ENCODE measurements at regions of chr12 and their contacts with region 1.

Region 1: DNA sequence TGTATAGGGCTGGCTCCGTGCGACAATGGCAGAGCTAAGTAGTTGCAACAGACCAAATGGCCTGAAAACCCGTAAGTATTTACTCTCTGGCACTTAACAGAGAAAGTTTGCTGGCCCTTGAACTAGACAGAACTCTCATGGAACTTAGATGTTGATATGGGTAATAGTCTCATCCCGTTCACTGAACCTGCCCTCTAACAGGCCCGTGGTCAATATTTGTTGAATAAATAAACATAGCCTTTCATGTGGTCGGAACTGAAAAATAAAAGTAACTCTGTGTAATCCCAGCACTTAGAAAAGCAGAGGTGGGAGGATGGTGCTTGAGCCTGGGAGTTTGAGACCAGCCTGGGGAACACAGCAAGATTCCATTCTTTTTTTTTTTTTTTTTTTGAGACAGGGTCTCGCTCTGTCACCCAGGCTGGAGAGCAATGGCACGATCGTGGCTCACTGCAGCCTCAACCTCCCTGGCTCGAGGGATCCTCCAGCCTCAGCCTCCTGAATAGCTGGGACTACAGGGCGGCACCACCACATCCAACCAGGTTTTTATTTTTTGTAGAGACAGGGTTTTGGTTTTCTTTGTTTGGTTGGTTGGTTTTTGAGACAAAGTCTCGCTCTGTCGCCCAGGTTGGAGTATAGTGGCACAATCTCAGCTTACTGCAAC is 29.7 kb downstream of the KDM2B start:
- DNase-seq: no peak
- ATAC-seq: no peak
- H3K4me3 Mint-ChIP-seq: no peak overlapping the region
- H3K27ac Mint-ChIP-seq: no peak overlapping the region
- H3K4me1 Mint-ChIP-seq: peaks cover 13% of the 10 kb centered on the region
- H3K27me3 Mint-ChIP-seq: no peaks in the 10 kb centered on the region

Region 2: GRCh38 chr12:121364683-121365121 is 186.4 kb before region 1 on chr12:
- CTCF ChIA-PET with region 1: no interaction called
- DNase-seq: no peak
- ATAC-seq: no peak
- H3K4me3 Mint-ChIP-seq: no peak overlapping the region
- H3K27ac Mint-ChIP-seq: no peak overlapping the region
- H3K4me1 Mint-ChIP-seq: peaks cover 12% of the 10 kb centered on the region
- H3K27me3 Mint-ChIP-seq: peaks cover 27% of the 10 kb centered on the region

Region 3: GRCh38 chr12:121483949-121484348 is 67.2 kb before region 1 on chr12:
- CTCF ChIA-PET with region 1: interaction called, 13 read pairs
- DNase-seq: no peak
- ATAC-seq: no peak
- H3K4me3 Mint-ChIP-seq: no peak overlapping the region
- H3K27ac Mint-ChIP-seq: no peak overlapping the region
- H3K4me1 Mint-ChIP-seq: no peaks in the 10 kb centered on the region
- H3K27me3 Mint-ChIP-seq: no peaks in the 10 kb centered on the region

Region 4: GRCh38 chr12:121536899-121537813 is 13.9 kb before region 1 on chr12:
- CTCF ChIA-PET with region 1: interaction called, 10 read pairs
- DNase-seq: peak; percentile 79
- ATAC-seq: peak; percentile 65
- H3K4me3 Mint-ChIP-seq: peak overlapping the region; percentile 71
- H3K27ac Mint-ChIP-seq: peak overlapping the region; percentile 67
- H3K4me1 Mint-ChIP-seq: peaks cover 53% of the 10 kb centered on the region
- H3K27me3 Mint-ChIP-seq: no peaks in the 10 kb centered on the region

Region 5: GRCh38 chr12:121579981-121580868 is 29.1 kb after region 1 on chr12:
- CTCF ChIA-PET with region 1: interaction called, 32 read pairs
- DNase-seq: peak; percentile 85
- ATAC-seq: peak; percentile 78
- H3K4me3 Mint-ChIP-seq: peak overlapping the region; percentile 85
- H3K27ac Mint-ChIP-seq: peak overlapping the region; percentile 96
- H3K4me1 Mint-ChIP-seq: peaks cover 26% of the 10 kb centered on the region
- H3K27me3 Mint-ChIP-seq: no peaks in the 10 kb centered on the region

Region 6: DNA sequence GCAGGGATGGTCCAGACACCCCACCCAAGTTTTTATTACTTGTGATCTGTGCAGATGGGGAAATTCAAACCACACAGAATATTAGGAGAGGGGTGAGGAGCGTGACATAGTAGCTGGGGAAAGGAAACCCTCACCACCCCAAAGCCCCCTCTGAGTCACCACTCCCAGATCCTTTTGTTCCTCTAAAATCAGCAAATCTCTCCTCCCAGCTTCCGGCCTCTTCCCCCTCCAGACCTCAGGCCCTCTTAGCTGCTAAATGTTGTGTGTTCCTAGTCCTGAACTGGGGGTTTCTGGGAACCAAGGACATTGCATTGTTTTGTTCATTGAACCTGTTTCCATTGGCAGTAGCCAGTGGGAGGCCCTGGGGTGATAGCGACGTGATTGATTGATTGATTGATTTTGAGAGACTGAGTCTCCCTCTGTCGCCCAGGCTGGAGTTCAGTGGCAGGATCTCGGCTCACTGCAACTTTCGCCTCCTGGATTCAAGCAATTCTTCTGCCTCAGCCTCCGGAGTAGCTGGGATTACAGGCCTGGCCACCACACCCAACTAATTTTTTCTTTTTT is 69.3 kb after region 1 on chr12:
- CTCF ChIA-PET with region 1: interaction called, 111 read pairs
- DNase-seq: no peak
- ATAC-seq: no peak
- H3K4me3 Mint-ChIP-seq: no peak overlapping the region
- H3K27ac Mint-ChIP-seq: no peak overlapping the region
- H3K4me1 Mint-ChIP-seq: peaks cover 7% of the 10 kb centered on the region
- H3K27me3 Mint-ChIP-seq: no peaks in the 10 kb centered on the region

Region 7: DNA sequence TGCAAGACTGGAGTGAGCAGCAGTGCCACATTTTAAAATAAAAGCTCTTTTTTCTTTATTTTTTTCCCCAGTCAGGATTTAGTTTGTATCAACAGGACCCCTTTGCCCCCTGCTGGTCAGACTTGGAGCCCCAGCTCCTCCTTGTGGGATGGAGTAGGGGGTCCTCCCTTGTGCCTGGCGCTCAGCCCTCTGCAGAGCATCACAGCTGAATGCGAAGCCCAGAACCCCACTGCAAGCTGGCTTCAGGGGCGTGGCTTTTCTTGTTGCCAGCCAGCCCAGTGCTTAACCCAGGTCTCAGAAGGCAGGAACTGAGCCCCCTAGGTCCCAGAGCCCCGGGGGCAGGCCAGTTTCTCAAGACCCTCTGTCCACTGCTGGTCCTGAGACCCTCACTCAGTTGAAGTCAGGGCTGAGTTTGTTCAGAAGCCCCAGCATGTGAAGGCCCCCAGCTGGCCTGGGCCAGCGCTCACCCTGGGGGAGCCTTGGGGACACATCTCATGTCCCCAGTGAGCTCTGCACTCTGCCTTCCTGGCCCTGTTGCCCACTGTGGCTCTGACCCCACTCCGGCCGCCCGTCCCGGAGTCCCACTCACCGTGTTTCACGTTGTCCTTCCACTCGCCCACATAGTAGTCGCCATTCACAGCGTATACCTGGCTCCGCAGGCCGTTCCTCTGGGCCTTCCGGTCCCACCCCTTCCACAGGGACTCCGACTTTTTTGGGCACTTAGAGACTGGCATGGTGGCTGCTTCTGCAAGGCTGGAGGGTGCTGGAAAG is 117.8 kb after region 1 on chr12:
- CTCF ChIA-PET with region 1: interaction called, 64 read pairs
- DNase-seq: peak; percentile 68
- ATAC-seq: no peak
- H3K4me3 Mint-ChIP-seq: no peak overlapping the region
- H3K27ac Mint-ChIP-seq: no peak overlapping the region
- H3K4me1 Mint-ChIP-seq: peaks cover 51% of the 10 kb centered on the region
- H3K27me3 Mint-ChIP-seq: no peaks in the 10 kb centered on the region

Region 8: DNA sequence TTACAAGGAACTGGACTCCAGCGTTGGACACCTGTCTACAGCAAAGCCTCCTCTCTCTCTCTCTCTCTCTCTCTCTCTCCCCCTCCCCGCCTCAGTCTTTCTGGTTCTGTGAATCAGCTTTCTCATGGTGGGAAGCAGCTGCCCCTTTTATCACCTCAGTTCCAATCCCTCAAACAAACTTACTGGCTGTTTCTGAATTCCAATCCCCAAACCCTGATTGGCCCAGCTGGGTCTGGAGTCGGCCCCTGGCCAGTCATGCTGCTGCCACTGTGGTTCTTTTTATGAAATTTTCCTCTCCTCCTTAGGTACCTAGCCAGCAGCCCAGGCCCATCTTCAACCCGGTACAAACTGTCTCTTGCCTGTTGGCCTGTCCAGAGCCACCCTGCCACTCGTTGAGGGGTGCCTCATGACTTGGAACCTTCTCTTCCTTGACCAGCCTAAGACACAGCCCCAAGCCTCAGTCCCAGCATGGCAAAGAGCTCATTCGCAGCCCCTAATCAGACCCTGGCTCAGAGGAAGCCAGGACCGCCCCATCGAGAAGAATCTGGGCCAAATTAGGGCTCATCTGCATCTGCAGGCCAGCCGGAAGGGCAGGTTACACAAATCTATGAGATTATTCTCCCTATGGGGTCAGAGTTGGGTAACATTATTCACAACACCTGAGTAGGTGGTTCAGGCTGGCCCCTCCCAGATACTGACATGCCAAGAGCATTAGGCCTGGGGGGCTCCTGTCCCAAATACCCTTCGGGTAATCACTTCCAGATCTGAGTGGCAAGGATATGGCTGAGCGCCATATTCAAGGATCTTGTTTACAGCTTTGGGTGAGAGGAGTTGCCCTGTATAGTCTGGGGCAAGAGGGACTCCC is 127.8 kb after region 1 on chr12:
- CTCF ChIA-PET with region 1: interaction called, 88 read pairs
- DNase-seq: no peak
- ATAC-seq: no peak
- H3K4me3 Mint-ChIP-seq: no peak overlapping the region
- H3K27ac Mint-ChIP-seq: peak overlapping the region; percentile 18
- H3K4me1 Mint-ChIP-seq: peaks cover 5% of the 10 kb centered on the region
- H3K27me3 Mint-ChIP-seq: no peaks in the 10 kb centered on the region